Dendritic cell treated with granulocyte-macrophage colony-stimulating factor and Interleukin-4, amounts not matched to agents 40 ng/mL and 50 ng/mL, for 4 days (primary cell): ENCODE measurements at regions of chr19 and their contacts with region 1.

Region 1: GRCh38 chr19:2050991-2051772 is at the start of gene MKNK2:
- H3K4me3 Mint-ChIP-seq: peak within 1 kb of the TSS; percentile 81
- H3K27ac Mint-ChIP-seq: peak within 1 kb of the TSS; percentile 90
- H3K4me1 Mint-ChIP-seq: peaks cover 59% of the 10 kb centered on the region
- H3K27me3 Mint-ChIP-seq: no peaks in the 10 kb centered on the region

Region 2: GRCh38 chr19:2016041-2016807 is 35.0 kb before region 1 on chr19:
- intact Hi-C with region 1: loop called (anchors 5 kb)
- H3K4me3 Mint-ChIP-seq: peak overlapping the region; percentile 61
- H3K27ac Mint-ChIP-seq: peak overlapping the region; percentile 47
- H3K4me1 Mint-ChIP-seq: peaks cover 46% of the 10 kb centered on the region
- H3K27me3 Mint-ChIP-seq: no peaks in the 10 kb centered on the region

Region 3: GRCh38 chr19:2061495-2062381 is 10.6 kb after region 1 on chr19:
- intact Hi-C with region 1: loop called (anchors 1 kb)
- H3K4me3 Mint-ChIP-seq: peak overlapping the region; percentile 81
- H3K27ac Mint-ChIP-seq: peak overlapping the region; percentile 91
- H3K4me1 Mint-ChIP-seq: peaks cover 55% of the 10 kb centered on the region
- H3K27me3 Mint-ChIP-seq: no peaks in the 10 kb centered on the region